Naive thymus-derived CD4-positive, alpha-beta T cell (primary cell): ENCODE measurements at regions of chr17 and their contacts with region 1.

Region 1: GRCh38 chr17:75289115-75289831 is at the start of gene SLC25A19:
- DNase-seq: peak; percentile 80 to 98 (median 95)
- ATAC-seq: peak; percentile 96
- H3K4me3 ChIP-seq: peak within 1 kb of the TSS; percentile 84
- H3K4me3 Mint-ChIP-seq: peak within 1 kb of the TSS; percentile 96 to 100 (median 100)
- H3K27ac ChIP-seq: peak within 1 kb of the TSS; percentile 90
- H3K27ac Mint-ChIP-seq: peak within 1 kb of the TSS; percentile 99 to 100 (median 100)
- H3K4me1 ChIP-seq: peaks cover 0 to 6% of the 10 kb centered on the region in 2 donors
- H3K4me1 Mint-ChIP-seq: peaks cover 6 to 28% (median 15%) of the 10 kb centered on the region in 7 donors
- H3K27me3 ChIP-seq: no peaks in the 10 kb centered on the region
- H3K27me3 Mint-ChIP-seq: peaks cover 0 to 2% (median 0%) of the 10 kb centered on the region in 5 donors
- total RNA-seq, gene SLC25A19: 15.6 to 42.5 (median 21.1) TPM

Region 2: DNA sequence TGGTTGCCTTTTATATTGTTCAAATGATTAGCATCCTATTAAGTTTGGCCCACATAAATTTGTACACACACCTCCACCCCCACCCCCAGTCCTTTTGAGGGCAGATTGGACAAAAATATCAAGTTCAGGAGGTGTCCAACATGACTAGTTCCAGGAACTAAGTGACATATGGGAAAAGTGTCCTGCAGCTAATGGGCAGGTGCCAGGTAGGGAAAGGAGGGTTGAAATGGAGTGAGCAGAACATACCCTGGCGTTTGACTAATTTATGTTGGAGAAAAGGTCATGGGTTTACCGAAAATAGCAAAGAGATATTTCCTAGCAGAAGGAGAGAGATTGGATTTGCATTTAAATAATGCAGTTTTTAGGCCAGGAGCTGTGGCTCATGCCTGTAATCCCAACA is 237.3 kb before region 1 on chr17:
- CTCF ChIA-PET with region 1: no interaction called
- POLR2A ChIA-PET with region 1: no interaction called
- intact Hi-C with region 1: no loop called
- DNase-seq: no peak
- ATAC-seq: no peak
- H3K4me3 ChIP-seq: no peak overlapping the region
- H3K4me3 Mint-ChIP-seq: no peak overlapping the region
- H3K27ac ChIP-seq: no peak overlapping the region
- H3K27ac Mint-ChIP-seq: peak overlapping the region in 3 of 9 donors; percentile 15 to 71 (median 51)
- H3K4me1 ChIP-seq: peaks cover 8 to 13% of the 10 kb centered on the region in 2 donors
- H3K4me1 Mint-ChIP-seq: peaks cover 16 to 47% (median 37%) of the 10 kb centered on the region in 7 donors
- H3K27me3 ChIP-seq: no peaks in the 10 kb centered on the region
- H3K27me3 Mint-ChIP-seq: no peaks in the 10 kb centered on the region

Region 3: GRCh38 chr17:75182569-75183450 is 106.5 kb before region 1 on chr17 and contains the start of gene SUMO2:
- CTCF ChIA-PET with region 1: no interaction called
- POLR2A ChIA-PET with region 1: no interaction called
- intact Hi-C with region 1: loop called in 1 of 2 experiments (anchors 1 kb)
- DNase-seq: peak; percentile 90 to 97 (median 94)
- ATAC-seq: peak; percentile 92
- H3K4me3 ChIP-seq: peak within 1 kb of the TSS; percentile 56
- H3K4me3 Mint-ChIP-seq: peak within 1 kb of the TSS; percentile 87 to 100 (median 92)
- H3K27ac ChIP-seq: peak within 1 kb of the TSS; percentile 94
- H3K27ac Mint-ChIP-seq: peak within 1 kb of the TSS; percentile 92 to 99 (median 97)
- H3K4me1 ChIP-seq: peaks cover 22 to 26% of the 10 kb centered on the region in 2 donors
- H3K4me1 Mint-ChIP-seq: peaks cover 20 to 55% (median 38%) of the 10 kb centered on the region in 7 donors
- H3K27me3 ChIP-seq: no peaks in the 10 kb centered on the region
- H3K27me3 Mint-ChIP-seq: no peaks in the 10 kb centered on the region
- total RNA-seq, gene SUMO2: 201 to 494 (median 247) TPM

Region 4: DNA sequence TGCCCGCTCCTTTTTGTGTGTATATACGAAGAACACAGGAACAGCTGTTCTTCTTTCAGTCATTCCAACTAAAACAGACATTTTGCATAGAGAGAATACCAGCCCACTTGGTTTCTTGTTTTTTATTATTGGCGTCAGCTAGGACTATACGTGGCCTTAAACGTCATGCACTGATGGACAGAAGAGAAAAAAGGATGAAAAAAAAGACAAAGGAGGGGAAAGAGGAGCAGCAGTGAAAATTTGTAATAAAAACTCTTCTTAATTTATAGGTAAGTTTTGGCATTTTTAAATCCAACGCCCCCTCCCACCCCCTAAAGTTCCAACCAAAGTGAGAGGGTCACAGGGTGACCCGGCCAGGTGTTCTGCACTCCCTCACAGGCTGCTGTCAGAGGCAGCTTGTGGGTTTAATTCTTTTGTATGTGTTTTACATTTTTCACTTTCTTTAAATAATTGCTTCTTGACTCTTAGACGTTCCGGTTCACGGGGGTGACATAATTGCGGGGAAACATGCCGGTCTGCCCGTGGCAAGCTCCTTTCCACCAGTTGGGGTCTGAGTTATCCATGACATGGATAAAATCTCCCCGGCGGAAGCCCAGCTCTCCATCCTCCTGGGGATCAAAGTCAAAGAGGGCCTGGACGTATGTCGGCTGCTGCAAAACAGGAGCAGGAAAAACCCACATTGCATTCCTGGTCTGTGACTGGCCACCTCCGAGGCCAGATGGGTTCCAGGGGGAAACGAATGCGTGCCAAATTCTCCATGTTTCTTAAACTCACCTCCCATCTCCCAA is 30.8 kb after region 1 on chr17:
- CTCF ChIA-PET with region 1: interaction called, 7 read pairs
- POLR2A ChIA-PET with region 1: interaction called, 3 read pairs
- intact Hi-C with region 1: loop called (anchors 1 kb)
- DNase-seq: no peak
- ATAC-seq: no peak
- H3K4me3 ChIP-seq: no peak overlapping the region
- H3K4me3 Mint-ChIP-seq: no peak overlapping the region
- H3K27ac ChIP-seq: no peak overlapping the region
- H3K27ac Mint-ChIP-seq: peak overlapping the region in 3 of 9 donors; percentile 13 to 51 (median 48)
- H3K4me1 ChIP-seq: peaks cover 4% of the 10 kb centered on the region in 2 donors
- H3K4me1 Mint-ChIP-seq: peaks cover 0 to 20% (median 9%) of the 10 kb centered on the region in 7 donors
- H3K27me3 ChIP-seq: no peaks in the 10 kb centered on the region
- H3K27me3 Mint-ChIP-seq: no peaks in the 10 kb centered on the region

Region 5: GRCh38 chr17:75515496-75516254 is 226.4 kb after region 1 on chr17 and contains the start of gene CASKIN2:
- CTCF ChIA-PET with region 1: interaction called, 6 read pairs
- POLR2A ChIA-PET with region 1: interaction called, 4 read pairs
- intact Hi-C with region 1: loop called (anchors 1 kb)
- DNase-seq: peak; percentile 57 to 88 (median 70)
- ATAC-seq: peak; percentile 80
- H3K4me3 ChIP-seq: peak within 1 kb of the TSS; percentile 97
- H3K4me3 Mint-ChIP-seq: peak within 1 kb of the TSS; percentile 69 to 85 (median 78)
- H3K27ac ChIP-seq: no peak within 1 kb of the TSS
- H3K27ac Mint-ChIP-seq: peak within 1 kb of the TSS in 4 of 9 donors; percentile 36 to 63 (median 47)
- H3K4me1 ChIP-seq: peaks cover 23 to 25% of the 10 kb centered on the region in 2 donors
- H3K4me1 Mint-ChIP-seq: peaks cover 18 to 28% (median 22%) of the 10 kb centered on the region in 7 donors
- H3K27me3 ChIP-seq: no peaks in the 10 kb centered on the region
- H3K27me3 Mint-ChIP-seq: peaks cover 0 to 14% (median 0%) of the 10 kb centered on the region in 5 donors
- total RNA-seq, gene CASKIN2: 0.22 to 1.2 (median 0.92) TPM

Region 6: DNA sequence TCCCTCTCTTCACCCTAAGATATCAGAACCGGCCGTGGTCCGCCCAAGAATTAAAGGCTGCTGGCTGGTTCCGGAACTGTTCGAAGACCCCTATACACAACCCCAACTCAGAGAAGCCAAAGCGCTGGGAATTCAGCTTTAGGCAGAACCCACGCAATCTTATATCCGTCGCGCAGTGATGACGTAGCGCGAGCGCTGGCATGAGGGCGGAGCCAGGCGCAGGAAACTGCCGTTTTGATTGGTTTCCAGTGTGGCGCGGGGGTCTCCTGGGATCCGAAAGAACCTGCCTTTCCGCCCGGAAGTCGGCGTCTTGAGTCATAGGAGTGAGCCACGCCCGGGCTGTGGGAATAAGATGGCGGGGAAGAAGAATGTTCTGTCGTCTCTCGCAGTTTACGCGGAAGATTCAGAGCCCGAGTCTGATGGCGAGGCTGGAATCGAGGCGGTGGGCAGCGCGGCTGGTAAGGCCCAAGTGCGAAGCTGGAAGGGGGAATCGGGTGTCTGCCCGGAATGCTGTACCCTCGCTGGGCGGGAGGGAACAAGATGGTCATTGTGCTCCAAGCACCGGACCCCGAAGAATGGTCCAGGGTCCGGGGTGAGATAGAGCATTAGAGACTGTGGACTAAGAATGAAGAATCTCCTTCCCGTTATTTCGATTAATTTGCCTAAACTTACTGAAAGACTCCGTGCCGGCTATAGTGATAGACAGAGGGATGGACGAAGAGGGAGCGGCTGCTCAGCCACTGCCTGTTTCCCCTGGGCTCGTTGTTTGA is 377.9 kb after region 1 on chr17 and contains the starts of genes RECQL5 and SAP30BP:
- CTCF ChIA-PET with region 1: no interaction called
- POLR2A ChIA-PET with region 1: interaction called, 4 read pairs
- intact Hi-C with region 1: loop called in 1 of 2 experiments (anchors 1 kb)
- DNase-seq: peak; percentile 94 to 98 (median 96)
- ATAC-seq: peak; percentile 100
- H3K4me3 ChIP-seq: peak within 1 kb of the TSS; percentile 99
- H3K4me3 Mint-ChIP-seq: peak within 1 kb of the TSS in 6 of 10 donors; percentile 59 to 74 (median 64)
- H3K27ac ChIP-seq: peak within 1 kb of the TSS; percentile 96
- H3K27ac Mint-ChIP-seq: peak within 1 kb of the TSS in 5 of 9 donors; percentile 6 to 83 (median 60)
- H3K4me1 ChIP-seq: peaks cover 21 to 26% of the 10 kb centered on the region in 2 donors
- H3K4me1 Mint-ChIP-seq: peaks cover 11 to 34% (median 21%) of the 10 kb centered on the region in 7 donors
- H3K27me3 ChIP-seq: no peaks in the 10 kb centered on the region
- H3K27me3 Mint-ChIP-seq: no peaks in the 10 kb centered on the region
- total RNA-seq, gene RECQL5: 38.7 to 76.5 (median 49.2) TPM
- total RNA-seq, gene SAP30BP: 97.6 to 198 (median 116) TPM